ENCODE measurements at regions of chr12 and their contacts with region 1.

Region 1: GRCh38 chr12:131290255-131290959 is 336.7 kb downstream of the ADGRD1 start:
- DNase-seq: no peak
- H3K4me3 ChIP-seq: no peak overlapping the region
- H3K4me3 Mint-ChIP-seq: no peak overlapping the region
- H3K27ac ChIP-seq: no peak overlapping the region
- H3K27ac Mint-ChIP-seq: no peak overlapping the region
- H3K4me1 ChIP-seq: no peaks in the 10 kb centered on the region
- H3K4me1 Mint-ChIP-seq: no peaks in the 10 kb centered on the region
- H3K27me3 ChIP-seq: no peaks in the 10 kb centered on the region
- H3K27me3 Mint-ChIP-seq: peaks cover 0 to 8% of the 10 kb centered on the region in 2 donors

Region 2: DNA sequence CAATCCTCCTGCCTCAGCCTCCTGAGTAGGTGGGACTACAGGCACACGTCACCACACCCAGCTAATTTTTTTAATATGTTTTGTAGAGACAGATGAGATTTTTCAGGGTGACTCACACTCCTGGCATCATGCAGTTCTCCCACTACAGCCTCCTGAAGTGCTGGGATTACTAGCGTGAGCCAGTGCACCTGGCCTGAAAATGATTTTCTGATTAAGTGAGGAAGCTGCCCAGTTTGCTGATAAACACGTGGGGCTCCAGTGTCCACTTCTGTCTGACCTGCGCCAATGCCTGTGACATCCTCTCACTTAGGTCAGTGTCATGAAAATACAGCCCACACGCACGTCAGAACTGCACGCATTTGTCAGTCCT is 383.5 kb after region 1 on chr12:
- CTCF ChIA-PET with region 1: no interaction called
- POLR2A ChIA-PET with region 1: no interaction called
- intact Hi-C with region 1: loop called (anchors 10 kb)
- DNase-seq: no peak
- H3K4me3 ChIP-seq: no peak overlapping the region
- H3K4me3 Mint-ChIP-seq: no peak overlapping the region
- H3K27ac ChIP-seq: no peak overlapping the region
- H3K27ac Mint-ChIP-seq: peak overlapping the region in 1 of 7 donors; percentile 8
- H3K4me1 ChIP-seq: no peaks in the 10 kb centered on the region
- H3K4me1 Mint-ChIP-seq: no peaks in the 10 kb centered on the region
- H3K27me3 ChIP-seq: no peaks in the 10 kb centered on the region
- H3K27me3 Mint-ChIP-seq: peaks cover 1 to 4% of the 10 kb centered on the region in 2 donors